Right ventricle myocardium inferior (tissue), 1 donor: ENCODE measurements at regions of chr15 and their contacts with region 1.

Region 1: DNA sequence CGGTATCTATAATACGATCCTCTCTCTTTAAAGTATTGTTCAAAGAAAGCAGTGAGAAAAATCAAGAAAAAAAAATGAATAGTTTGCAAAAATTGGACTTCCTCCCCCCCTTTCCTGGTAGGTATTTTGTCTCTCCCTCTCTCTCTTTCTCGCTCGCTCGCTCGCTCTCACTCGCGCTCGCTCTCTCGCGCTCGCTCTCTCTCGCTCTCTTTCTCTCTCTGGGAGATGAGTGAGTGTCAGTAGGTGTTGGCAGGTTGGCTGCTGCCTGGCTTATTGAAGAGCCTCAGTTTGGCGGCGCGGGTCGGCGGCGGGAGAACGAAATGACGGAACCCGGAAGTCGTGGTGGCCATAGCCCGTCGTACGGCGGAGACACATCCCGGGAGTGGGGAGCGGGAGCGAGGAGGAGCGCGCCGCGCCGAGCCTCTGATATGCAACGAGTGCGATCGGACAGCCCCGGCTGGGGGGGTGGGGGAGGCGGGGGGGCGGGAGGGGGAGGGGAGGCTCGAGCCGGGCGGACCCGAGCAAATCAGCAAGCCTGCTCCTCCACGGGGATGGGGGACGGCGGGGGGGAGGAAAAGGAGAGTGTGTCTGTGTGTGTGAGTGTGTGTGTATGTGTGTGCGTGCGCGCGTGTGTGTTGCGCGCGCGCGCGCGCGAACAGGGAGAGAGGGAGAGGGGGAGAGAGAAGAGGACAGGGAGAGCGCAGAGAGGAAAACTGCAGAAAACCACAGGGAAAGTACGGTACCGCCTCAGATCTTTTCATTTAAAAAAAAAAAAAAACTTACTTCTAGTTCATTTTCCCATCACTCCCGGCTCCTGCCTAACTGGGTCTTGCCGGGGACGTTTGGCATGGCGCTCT is at the start of gene MEIS2:
- DNase-seq: peak; percentile 95
- ATAC-seq: peak; percentile 80
- total RNA-seq, gene MEIS2: 45.4 TPM

Region 2: DNA sequence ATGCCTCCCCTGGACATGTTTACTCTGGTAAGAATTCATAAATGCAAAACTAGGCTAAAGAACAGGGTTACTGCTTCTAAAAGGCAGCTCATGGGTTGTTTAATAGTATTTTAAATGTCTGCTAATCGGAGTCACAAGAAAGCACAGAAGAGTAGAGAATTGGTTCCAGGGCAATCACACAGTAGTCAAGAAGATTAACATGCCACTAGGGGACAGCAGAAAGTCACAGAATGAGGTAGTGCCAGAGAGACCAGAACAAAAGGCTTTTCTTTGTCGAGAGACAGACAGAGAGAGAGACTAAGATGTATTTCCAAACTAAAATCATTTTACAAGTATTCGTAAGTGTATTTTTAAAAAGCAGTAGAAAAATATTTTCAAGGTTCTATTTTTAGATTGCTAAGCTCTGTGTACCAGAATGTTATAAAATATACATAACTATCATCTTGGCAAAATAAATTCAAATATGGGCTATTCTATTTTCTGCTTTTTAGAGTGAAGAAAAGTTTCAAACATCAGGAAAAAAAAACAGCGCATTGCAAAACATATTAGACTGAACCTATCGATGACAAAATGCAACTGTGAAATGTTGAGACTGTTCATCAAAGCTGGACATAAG is 599.2 kb before region 1 on chr15:
- intact Hi-C with region 1: loop called (anchors 10 kb)
- DNase-seq: no peak
- ATAC-seq: peak; percentile 92

Region 3: DNA sequence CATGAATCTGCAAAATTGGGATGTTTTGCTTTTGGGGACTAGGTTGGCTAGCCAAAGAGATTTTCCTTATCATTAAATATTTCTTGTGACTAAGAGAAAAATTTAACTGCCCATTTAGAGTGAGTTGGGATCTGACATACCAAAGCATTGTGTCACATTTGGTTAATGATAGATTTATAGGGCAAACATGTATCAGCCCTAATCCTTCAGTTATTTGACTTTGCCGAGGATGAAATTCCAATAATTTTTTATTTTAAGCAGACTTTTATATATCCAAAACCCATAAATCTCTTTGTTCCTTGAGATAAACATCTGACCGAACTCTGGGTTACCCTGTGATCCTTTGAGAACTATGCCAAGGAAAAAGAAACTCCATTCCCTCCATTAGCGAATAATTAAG is 302.0 kb before region 1 on chr15:
- intact Hi-C with region 1: loop called (anchors 10 kb)
- DNase-seq: no peak
- ATAC-seq: no peak

Region 4: GRCh38 chr15:36996538-36997181 is 103.7 kb before region 1 on chr15:
- intact Hi-C with region 1: loop called (anchors 5 kb)
- DNase-seq: no peak
- ATAC-seq: peak; percentile 50

Region 5: GRCh38 chr15:37045859-37046740 is 54.2 kb before region 1 on chr15:
- intact Hi-C with region 1: no loop called
- DNase-seq: no peak
- ATAC-seq: peak; percentile 54

Region 6: GRCh38 chr15:37140531-37141058 is 40.3 kb after region 1 on chr15:
- intact Hi-C with region 1: no loop called
- DNase-seq: no peak
- ATAC-seq: no peak